Caki2 (cell line): ENCODE measurements at regions of chr16 and their contacts with region 1.

Region 1: DNA sequence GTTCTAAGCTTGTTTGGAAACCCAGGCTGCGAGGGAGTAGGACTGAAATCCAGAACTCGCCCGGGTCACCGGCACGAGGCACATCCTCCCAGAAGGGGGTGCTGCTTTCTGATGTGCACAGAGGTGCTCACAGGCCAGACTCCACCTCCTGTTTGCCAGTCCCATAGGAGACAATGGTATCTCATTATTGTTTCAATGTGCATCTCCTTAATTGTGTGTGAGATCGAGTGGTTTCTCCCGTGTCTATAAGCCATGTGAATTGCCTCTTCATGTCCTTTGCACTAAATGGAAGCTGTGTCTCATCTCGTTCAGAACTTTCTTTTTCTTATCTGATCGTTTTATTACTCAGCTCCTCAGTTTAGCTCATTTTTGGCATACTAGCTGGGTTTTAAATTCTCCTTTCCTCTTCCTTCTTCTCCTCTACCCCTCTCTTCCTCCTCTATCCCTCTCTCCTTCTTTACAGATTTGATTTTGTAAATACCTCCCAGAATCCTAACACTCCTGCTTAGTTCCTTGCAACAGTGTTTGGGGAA is 32.1 kb upstream of the PRKCB start:
- DNase-seq: no peak

Region 2: DNA sequence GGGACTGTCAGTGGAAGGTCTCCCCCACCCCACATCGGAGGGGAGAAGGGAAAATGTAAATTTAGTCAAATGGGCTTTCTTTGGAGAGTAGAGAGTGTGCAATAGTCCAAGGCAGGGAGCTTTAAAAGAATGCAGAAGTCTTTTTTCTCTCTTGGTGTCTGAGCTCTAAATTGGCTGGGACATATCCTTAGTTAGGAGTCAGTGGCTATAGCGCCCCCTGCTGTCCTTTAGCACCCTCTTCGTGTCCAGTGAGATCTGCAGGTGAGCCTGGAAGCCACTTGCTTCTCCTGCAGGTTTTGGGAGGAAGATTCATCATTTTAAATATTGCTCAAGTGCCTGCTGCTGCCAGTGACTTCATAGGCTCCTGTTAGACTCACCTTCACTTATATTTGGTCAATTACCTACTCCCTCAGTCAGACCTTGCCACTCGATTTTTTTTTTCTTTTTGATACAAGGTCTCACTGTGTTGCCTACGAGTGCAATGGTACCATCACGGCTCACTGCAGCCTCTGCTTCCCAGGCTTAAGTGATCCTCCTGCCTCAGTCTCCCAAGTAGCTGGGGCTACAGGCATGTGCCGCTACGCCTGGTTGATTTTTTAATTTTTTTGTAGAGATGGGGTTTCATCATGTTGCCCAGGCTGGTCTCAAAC is 206.9 kb after region 1 on chr16:
- in situ Hi-C with region 1: loop called (anchors 10 kb)
- DNase-seq: peak; percentile 46